Esophagus muscularis mucosa (tissue), 4 donors: ENCODE measurements at regions of chr10 and their contacts with region 1.

Region 1: DNA sequence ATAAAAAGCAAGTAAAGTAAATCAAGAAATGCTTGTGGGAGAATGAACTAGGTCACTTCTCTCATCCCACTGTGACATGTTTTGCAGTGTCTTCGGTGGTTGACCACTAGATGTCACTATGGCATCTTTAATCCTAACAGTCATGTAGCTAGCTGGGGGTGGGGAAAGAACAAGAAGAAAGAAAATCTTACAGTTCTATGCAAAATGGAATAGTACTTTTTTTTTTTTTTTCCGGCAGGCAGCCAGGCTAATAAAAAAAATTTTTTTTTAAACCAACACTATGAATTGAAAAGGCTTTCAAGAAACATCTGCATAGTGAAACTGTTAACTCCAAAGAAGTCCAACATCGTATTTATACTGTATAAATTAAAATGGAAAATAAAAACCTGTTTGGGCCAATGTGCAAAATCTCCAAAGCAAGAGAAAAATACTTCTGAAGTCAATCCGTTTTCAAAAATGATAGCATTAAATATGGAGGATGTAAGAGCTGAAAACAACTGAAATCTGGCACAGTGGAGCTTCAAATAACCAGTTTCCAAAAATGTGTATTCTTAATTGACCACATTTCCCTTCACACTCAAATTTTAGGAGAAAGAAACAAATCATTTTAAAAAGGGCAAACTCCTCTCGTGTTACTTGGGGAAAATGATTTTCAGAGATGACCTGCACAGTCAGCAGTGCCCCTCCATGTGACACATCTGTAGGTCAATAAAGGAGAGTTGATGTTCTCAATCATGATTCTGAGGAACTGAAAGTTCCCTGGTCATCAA is 38.5 kb downstream of the CDK1 start:
- DNase-seq: no peak
- H3K4me3 ChIP-seq: peak overlapping the region in 1 of 4 donors; percentile 7
- H3K27ac ChIP-seq: no peak overlapping the region
- H3K4me1 ChIP-seq: peaks cover 10 to 40% (median 19%) of the 10 kb centered on the region in 4 donors
- H3K27me3 ChIP-seq: no peaks in the 10 kb centered on the region
- CTCF ChIP-seq: peak; percentile 87 to 88 (median 88)
- EP300 ChIP-seq: no peak
- POLR2A ChIP-seq: no peak

Region 2: DNA sequence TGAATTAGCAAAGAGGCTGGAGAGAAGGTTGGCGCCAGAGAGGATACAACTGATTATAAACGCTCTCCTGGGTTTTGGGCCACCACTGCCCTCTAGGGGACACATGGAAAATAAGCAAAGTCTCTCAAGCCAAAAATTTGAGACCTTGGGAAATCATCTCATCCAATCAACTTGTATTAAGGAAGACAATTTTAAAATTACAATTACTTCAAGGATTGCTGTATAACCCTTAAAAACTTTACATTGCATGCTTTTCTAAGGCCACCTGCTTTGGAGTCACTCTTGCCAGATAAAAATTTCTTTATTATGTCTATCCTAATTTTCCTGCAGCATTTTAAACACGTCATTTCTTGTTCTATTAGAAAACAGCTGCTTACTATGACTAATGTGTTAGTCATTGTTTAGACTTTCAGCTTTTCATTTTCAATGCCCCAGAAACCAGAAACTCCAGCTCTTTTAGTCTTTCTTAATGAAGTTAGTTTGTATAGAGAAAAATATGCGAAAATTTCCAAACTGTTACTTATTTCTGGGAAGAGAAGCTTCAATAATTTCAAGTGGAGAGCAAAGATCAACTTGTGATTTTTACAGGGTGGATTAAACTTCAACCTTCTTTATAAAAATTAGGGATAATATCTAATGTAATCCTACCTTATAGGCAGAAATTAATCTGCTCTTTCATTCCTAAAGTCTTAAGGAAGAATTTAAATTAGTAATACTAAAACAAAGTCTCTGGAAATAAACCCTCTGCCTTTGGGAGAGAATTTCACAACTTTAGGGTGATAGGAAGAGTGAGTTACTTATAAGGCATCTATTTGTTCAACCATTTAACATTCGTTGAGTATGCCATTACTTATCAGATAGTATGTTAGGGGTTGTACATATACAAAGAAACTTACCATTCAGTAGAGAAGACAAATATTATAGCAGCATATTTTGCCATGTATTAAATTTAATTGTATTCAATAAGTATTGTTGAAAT is 147.7 kb after region 1 on chr10:
- intact Hi-C with region 1: loop called (anchors 2 kb)
- DNase-seq: no peak
- H3K4me3 ChIP-seq: no peak overlapping the region
- H3K27ac ChIP-seq: peak overlapping the region; percentile 15 to 68 (median 40)
- H3K4me1 ChIP-seq: peaks cover 5 to 43% (median 35%) of the 10 kb centered on the region in 4 donors
- H3K27me3 ChIP-seq: no peaks in the 10 kb centered on the region
- CTCF ChIP-seq: peak; percentile 77 to 84 (median 82)
- EP300 ChIP-seq: no peak
- POLR2A ChIP-seq: no peak

Region 3: DNA sequence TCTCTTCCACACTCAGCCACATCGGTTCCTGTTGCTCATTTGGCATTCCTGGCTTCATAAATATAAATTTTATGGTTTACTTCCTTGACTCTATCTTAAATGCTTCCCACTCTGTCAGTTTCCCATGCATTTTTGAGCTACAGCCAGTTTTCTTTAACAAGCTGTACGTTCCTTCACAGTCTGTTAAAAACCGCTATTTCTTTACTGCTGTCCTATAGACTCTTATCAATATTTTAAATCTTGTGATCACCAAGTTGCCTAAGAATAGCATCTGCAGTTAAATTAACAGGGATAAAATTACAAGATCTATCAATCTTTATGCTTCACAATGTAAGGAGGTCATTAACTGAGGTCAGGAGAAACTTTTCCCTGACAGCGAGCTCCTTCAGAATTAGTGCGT is 230.3 kb after region 1 on chr10:
- intact Hi-C with region 1: no loop called
- DNase-seq: peak; percentile 34
- H3K4me3 ChIP-seq: no peak overlapping the region
- H3K27ac ChIP-seq: no peak overlapping the region
- H3K4me1 ChIP-seq: no peaks in the 10 kb centered on the region
- H3K27me3 ChIP-seq: no peaks in the 10 kb centered on the region
- CTCF ChIP-seq: no peak
- EP300 ChIP-seq: no peak
- POLR2A ChIP-seq: no peak

Region 4: DNA sequence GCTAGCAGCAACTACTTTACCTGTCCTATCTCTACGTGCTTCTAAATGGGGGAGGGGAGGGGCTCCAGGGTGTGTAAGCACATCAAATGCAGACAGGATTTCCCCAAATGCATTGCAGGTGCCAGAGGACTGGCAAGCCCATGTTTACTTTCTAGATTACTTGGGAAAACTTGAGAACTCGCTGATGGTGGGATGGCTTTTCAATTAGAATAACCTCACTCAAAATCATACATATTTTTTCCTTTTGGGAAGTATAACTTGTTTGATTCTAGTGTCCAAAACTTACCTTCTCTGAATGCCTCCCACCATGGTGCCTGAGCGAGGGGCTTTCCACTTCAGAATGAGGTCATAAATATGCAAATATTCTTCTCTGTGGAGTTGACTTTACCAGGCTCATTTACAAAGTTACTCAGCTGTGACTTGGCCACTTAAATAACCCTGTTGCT is 318.5 kb after region 1 on chr10:
- intact Hi-C with region 1: loop called (anchors 10 kb)
- DNase-seq: no peak
- H3K4me3 ChIP-seq: no peak overlapping the region
- H3K27ac ChIP-seq: no peak overlapping the region
- H3K4me1 ChIP-seq: peaks cover 0 to 39% (median 27%) of the 10 kb centered on the region in 4 donors
- H3K27me3 ChIP-seq: no peaks in the 10 kb centered on the region
- CTCF ChIP-seq: no peak
- EP300 ChIP-seq: no peak
- POLR2A ChIP-seq: no peak

Region 5: GRCh38 chr10:61284222-61284890 is 467.5 kb after region 1 on chr10:
- intact Hi-C with region 1: loop called (anchors 2 kb)
- DNase-seq: no peak
- H3K4me3 ChIP-seq: no peak overlapping the region
- H3K27ac ChIP-seq: peak overlapping the region in 1 of 4 donors; percentile 4
- H3K4me1 ChIP-seq: peaks cover 0 to 40% (median 32%) of the 10 kb centered on the region in 4 donors
- H3K27me3 ChIP-seq: no peaks in the 10 kb centered on the region
- CTCF ChIP-seq: peak; percentile 65 to 81 (median 72)
- EP300 ChIP-seq: no peak
- POLR2A ChIP-seq: no peak

Region 6: DNA sequence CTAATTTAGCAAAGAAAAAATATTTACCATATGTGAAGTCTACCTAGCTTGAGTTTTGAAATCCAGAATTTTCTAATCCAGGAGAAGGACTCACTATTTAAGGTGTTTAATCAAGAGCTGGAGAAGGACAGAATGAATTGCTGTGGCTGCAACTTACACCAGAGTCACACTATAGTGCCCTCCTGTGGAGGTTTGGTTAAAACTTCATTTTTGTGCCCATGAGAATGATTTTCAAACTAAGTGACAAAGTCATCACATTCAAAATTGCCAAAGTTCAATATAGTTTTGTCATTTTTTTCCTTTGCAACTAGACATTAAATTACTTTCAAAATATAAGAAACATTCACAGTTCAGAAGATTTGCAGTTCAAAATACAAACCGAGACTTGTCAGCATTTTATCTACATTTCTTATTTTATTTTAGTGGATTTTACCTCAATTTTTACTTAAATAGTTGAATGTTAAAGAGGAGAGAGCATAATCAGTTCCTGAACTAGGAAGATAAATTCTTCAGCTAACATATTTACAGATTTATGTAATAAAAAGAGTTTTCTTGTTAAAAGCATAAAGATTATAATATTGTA is 916.6 kb after region 1 on chr10:
- intact Hi-C with region 1: loop called (anchors 5 kb)
- DNase-seq: no peak
- H3K4me3 ChIP-seq: no peak overlapping the region
- H3K27ac ChIP-seq: no peak overlapping the region
- H3K4me1 ChIP-seq: no peaks in the 10 kb centered on the region
- H3K27me3 ChIP-seq: no peaks in the 10 kb centered on the region
- CTCF ChIP-seq: peak; percentile 53 to 62 (median 61)
- EP300 ChIP-seq: no peak
- POLR2A ChIP-seq: no peak